ENCODE measurements at regions of chr9 and their contacts with region 1.

Region 1: DNA sequence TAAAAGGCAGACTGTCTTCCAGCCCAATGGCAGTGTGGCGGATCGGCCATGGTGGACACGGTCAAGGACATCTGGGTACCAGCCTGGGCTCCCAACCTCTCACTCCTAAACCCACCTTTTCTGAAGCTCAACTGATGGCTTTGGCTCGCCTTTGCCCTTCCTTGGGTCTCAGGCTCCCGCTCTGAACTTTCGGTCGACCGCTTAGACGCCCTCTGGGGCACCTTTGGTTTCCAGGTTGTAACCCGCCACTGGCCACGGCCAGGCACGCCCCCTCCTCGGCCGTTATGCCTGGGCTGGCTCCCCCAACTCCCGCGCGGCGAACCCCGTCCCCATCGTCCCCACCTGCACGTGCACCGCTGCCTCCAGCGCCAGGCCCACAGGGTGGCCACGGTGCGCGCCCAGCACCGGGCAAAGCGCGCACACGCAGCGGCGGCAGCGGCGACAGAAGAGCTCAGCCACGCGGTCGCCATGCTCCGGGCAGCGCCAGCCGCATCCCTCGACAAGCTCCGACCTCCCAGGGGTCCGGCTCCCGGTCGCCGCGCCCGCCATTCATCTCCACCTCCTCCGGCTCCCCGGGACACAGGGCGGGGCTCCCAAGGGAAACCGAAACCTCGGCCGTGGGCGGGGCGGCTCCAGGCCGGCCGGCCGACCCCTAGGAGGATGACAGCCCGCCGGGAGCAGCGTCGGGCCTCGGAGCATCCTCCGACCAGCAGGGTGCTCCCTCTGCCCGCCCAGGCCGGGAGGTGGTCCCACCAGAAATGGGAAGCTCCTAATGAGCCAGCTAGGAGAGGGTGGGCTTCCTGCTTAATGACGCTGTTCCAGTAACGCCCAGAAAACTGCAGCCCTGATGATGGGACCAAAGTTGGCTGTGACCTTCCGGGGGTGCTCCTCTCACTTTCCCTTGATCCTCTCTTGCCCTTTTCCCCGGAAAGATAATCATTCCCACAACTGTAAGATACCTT is at the start of gene TRIM14:
- DNase-seq: peak; percentile 51
- ATAC-seq: peak; percentile 76
- H3K4me3 Mint-ChIP-seq: peak within 1 kb of the TSS; percentile 91
- H3K27ac Mint-ChIP-seq: peak within 1 kb of the TSS; percentile 85
- H3K4me1 Mint-ChIP-seq: peaks cover 42% of the 10 kb centered on the region
- H3K27me3 Mint-ChIP-seq: no peaks in the 10 kb centered on the region
- CTCF ChIP-seq: no peak
- total RNA-seq, gene TRIM14: 11.7 and 12.8 TPM in 2 replicates

Region 2: GRCh38 chr9:97982683-97983588 is 136.0 kb before region 1 on chr9 and contains the start of gene ANP32B:
- CTCF ChIA-PET with region 1: no interaction called
- POLR2A ChIA-PET with region 1: interaction called, 4 read pairs
- intact Hi-C with region 1: loop called (anchors 1 kb)
- DNase-seq: peak; percentile 95
- ATAC-seq: peak; percentile 80
- H3K4me3 Mint-ChIP-seq: peak within 1 kb of the TSS; percentile 86
- H3K27ac Mint-ChIP-seq: peak within 1 kb of the TSS; percentile 92
- H3K4me1 Mint-ChIP-seq: peaks cover 38% of the 10 kb centered on the region
- H3K27me3 Mint-ChIP-seq: no peaks in the 10 kb centered on the region
- CTCF ChIP-seq: no peak
- total RNA-seq, gene ANP32B: 162 and 173 TPM in 2 replicates

Region 3: DNA sequence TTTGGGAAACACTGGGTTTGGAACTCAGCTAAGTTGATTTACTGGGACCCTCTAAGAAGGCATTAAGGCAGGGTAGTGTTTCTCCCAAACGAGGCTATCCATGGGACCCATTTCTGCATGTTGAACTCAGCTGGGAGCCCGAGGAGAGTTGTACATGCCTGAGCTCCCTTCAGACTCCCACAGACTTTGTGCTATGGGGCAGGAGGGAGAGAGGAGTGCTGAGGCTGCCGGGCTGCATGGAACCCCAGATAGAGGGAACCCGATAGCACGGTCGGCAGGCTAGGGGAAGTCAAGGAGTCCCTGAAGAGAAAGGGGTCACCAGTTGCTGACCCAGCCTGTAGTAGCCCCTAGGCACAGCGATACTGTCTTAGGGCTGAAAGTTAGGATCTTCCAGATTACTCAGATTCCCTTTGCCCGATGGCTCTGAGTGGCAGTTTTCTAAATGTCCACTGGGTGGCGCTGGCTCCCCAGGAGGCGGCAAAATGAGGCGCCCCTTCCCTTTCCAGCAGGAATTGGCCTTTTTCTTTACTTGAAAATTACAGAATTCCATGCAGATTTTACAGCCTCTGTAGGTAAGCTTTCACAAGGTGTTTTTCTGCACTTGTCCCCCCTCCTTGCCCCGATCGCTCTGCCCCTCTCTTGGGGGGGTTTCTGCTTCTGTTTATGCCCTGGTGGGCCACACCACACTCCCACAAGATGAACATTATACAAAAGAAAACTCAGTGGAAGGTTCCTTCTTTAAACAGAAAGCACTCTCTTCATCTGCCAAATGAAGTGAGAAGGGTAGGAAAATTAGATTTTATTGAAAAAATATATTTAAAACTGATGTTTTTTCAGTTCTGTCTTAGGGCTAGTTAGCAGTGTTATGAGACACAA is 44.6 kb before region 1 on chr9:
- CTCF ChIA-PET with region 1: interaction called, 7 read pairs
- POLR2A ChIA-PET with region 1: no interaction called
- intact Hi-C with region 1: loop called (anchors 5 kb)
- DNase-seq: peak; percentile 58
- ATAC-seq: peak; percentile 61
- H3K4me3 Mint-ChIP-seq: no peak overlapping the region
- H3K27ac Mint-ChIP-seq: peak overlapping the region; percentile 24
- H3K4me1 Mint-ChIP-seq: peaks cover 6% of the 10 kb centered on the region
- H3K27me3 Mint-ChIP-seq: no peaks in the 10 kb centered on the region
- CTCF ChIP-seq: peak; percentile 91

Region 4: DNA sequence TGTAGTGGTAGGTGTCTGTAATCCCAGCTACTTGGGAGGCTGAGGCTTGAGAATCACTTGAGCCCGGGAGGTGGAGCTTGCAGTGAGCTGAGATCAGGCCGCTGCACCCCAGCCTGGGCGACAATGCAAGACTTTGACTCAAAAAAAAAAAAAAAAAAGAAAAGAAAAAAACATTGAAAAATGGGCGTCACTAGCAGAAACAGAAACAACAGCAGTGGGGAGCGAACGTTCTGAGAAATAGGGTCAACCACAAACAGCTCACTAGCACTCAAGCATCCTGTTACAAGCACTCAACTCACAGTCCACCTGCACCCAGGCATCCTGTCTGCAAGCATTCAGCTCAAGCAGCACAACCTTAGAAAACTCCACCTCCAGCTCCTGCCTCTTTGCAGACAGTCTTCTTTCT is 17.1 kb before region 1 on chr9:
- CTCF ChIA-PET with region 1: interaction called, 4 read pairs
- POLR2A ChIA-PET with region 1: interaction called, 14 read pairs
- intact Hi-C with region 1: no loop called
- DNase-seq: peak; percentile 32
- ATAC-seq: peak; percentile 95
- H3K4me3 Mint-ChIP-seq: peak overlapping the region; percentile 42
- H3K27ac Mint-ChIP-seq: peak overlapping the region; percentile 84
- H3K4me1 Mint-ChIP-seq: peaks cover 87% of the 10 kb centered on the region
- H3K27me3 Mint-ChIP-seq: no peaks in the 10 kb centered on the region
- CTCF ChIP-seq: no peak

Region 5: GRCh38 chr9:98192503-98193335 is 73.8 kb after region 1 on chr9 and contains the start of gene CORO2A:
- CTCF ChIA-PET with region 1: no interaction called
- POLR2A ChIA-PET with region 1: interaction called, 5 read pairs
- intact Hi-C with region 1: loop called (anchors 2 kb)
- DNase-seq: peak; percentile 70
- ATAC-seq: peak; percentile 91
- H3K4me3 Mint-ChIP-seq: peak within 1 kb of the TSS; percentile 88
- H3K27ac Mint-ChIP-seq: no peak within 1 kb of the TSS
- H3K4me1 Mint-ChIP-seq: peaks cover 5% of the 10 kb centered on the region
- H3K27me3 Mint-ChIP-seq: no peaks in the 10 kb centered on the region
- CTCF ChIP-seq: no peak
- total RNA-seq, gene CORO2A: 0.59 and 0.78 TPM in 2 replicates

Region 6: DNA sequence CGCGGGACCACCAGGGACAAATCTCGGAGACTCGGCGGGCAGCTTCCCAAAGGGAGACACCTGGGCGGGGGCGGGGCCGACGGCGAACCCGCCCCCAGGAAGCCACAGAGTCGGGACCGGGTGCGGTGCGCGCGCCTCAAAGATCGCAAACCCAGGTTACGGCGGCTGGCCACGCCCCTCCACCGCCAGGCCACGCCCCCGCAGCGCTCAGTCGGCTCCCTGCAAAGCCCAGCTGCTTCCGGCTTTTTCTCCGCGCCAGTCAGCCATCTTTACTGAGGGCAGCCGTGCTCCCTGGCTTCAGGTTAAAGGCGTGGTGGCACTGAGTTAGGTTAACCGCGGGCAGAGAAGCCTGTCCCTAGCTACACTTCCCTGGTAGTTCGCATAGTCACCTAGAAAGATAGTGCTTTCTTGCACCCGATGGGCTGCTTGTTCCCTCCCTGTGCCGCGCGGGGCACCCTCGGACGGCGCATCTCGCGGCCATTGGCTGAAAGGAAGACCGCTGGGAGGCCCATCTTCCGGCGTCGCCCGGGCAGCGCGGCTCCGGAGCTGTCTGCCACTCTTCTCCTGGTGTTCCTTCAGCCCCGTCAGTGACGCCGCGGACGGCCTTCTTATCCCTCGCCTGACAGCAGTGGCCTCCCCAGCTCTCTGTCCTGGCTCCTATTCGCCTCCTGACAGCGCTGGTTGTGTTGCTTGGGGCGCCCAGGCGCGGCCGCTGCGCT is 136.8 kb after region 1 on chr9 and contains the start of gene TBC1D2:
- CTCF ChIA-PET with region 1: no interaction called
- POLR2A ChIA-PET with region 1: interaction called, 14 read pairs
- intact Hi-C with region 1: loop called (anchors 1 kb)
- DNase-seq: peak; percentile 98
- ATAC-seq: peak; percentile 90
- H3K4me3 Mint-ChIP-seq: peak within 1 kb of the TSS; percentile 98
- H3K27ac Mint-ChIP-seq: peak within 1 kb of the TSS; percentile 99
- H3K4me1 Mint-ChIP-seq: peaks cover 13% of the 10 kb centered on the region
- H3K27me3 Mint-ChIP-seq: no peaks in the 10 kb centered on the region
- CTCF ChIP-seq: no peak
- total RNA-seq, gene TBC1D2: 2.1 and 2.7 TPM in 2 replicates

Region 7: GRCh38 chr9:98315551-98316060 is 196.7 kb after region 1 on chr9:
- CTCF ChIA-PET with region 1: no interaction called
- POLR2A ChIA-PET with region 1: no interaction called
- intact Hi-C with region 1: no loop called
- DNase-seq: peak; percentile 61
- ATAC-seq: peak; percentile 95
- H3K4me3 Mint-ChIP-seq: no peak overlapping the region
- H3K27ac Mint-ChIP-seq: no peak overlapping the region
- H3K4me1 Mint-ChIP-seq: peaks cover 2% of the 10 kb centered on the region
- H3K27me3 Mint-ChIP-seq: no peaks in the 10 kb centered on the region
- CTCF ChIP-seq: no peak

Measured in activated B cell treated with CpG ODN at 0.5 μM for 24 hours (primary cell).